Astrocyte of the cerebellum (primary cell): ENCODE measurements at regions of chr9 and their contacts with region 1.

Region 1: GRCh38 chr9:20962536-20963225 is 68.8 kb downstream of the HACD4 start:
- DNase-seq: no peak
- H3K4me3 ChIP-seq: no peak overlapping the region
- CTCF ChIP-seq: no peak

Region 2: DNA sequence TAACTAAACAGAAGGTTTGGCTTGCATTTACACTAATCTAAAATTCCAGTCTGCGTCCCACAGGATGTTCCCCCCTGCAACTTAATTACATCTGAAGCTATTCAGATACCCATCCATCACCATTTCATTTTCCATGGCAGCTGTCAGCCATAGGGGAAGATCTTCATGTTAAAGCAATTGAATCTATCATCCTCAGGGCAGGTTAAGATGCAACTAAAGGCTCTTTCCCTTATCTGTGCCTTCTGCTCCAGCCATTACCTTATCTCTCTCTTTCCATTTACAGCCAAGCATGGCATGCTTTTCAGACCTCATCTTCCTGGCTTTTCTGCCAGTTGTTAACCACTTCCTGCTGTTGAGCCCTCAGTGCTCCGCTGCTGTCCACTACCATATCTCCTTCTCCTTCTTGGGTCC is 84.6 kb after region 1 on chr9:
- in situ Hi-C with region 1: loop called (anchors 5 kb)
- DNase-seq: no peak
- H3K4me3 ChIP-seq: no peak overlapping the region
- CTCF ChIP-seq: no peak

Region 3: GRCh38 chr9:21070171-21070571 is 107.5 kb after region 1 on chr9:
- in situ Hi-C with region 1: loop called (anchors 5 kb)
- DNase-seq: peak; percentile 93
- H3K4me3 ChIP-seq: no peak overlapping the region
- CTCF ChIP-seq: peak; percentile 19